IMR-90 (cell line): ENCODE measurements at regions of chr11 and their contacts with region 1.

Region 1: DNA sequence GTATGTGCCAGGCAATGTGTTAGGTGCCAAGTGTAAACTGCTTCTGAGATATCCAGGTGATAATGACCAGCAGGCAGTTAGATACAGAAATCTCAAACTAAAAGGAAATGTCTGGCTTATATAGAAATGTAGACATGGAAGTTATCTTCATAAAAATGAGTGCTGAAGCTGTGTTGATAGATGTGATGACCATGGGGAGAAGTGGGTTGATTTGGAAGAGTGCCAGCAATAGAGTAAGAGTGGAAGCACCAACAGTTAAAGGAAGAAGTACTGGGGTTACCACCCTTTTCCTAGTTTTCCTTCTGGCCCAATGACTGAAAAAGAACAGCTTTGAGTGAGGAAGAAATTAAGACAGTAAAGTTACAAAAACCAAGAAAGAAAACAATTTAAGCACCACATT is 68.5 kb downstream of the C2CD3 start:
- DNase-seq: no peak
- ATAC-seq: no peak
- H3K4me3 ChIP-seq: no peak overlapping the region
- H3K27ac ChIP-seq: no peak overlapping the region
- H3K4me1 ChIP-seq: no peaks in the 10 kb centered on the region
- H3K27me3 ChIP-seq: no peaks in the 10 kb centered on the region
- CTCF ChIP-seq: no peak
- POLR2A ChIP-seq: no peak
- RAD21 ChIP-seq: no peak

Region 2: GRCh38 chr11:74398244-74399159 is 296.2 kb after region 1 on chr11 and contains the start of gene PGM2L1:
- CTCF ChIA-PET with region 1: no interaction called
- POLR2A ChIA-PET with region 1: no interaction called
- dilution Hi-C with region 1: no loop called
- in situ Hi-C with region 1: no loop called
- intact Hi-C with region 1: no loop called
- DNase-seq: peak; percentile 90
- ATAC-seq: peak; percentile 97
- H3K4me3 ChIP-seq: peak within 1 kb of the TSS; percentile 64
- H3K27ac ChIP-seq: peak within 1 kb of the TSS; percentile 75
- H3K4me1 ChIP-seq: no peaks in the 10 kb centered on the region
- H3K27me3 ChIP-seq: no peaks in the 10 kb centered on the region
- CTCF ChIP-seq: no peak
- POLR2A ChIP-seq: peak; percentile 48; the same call in 1 of the 2 replicates
- RAD21 ChIP-seq: 0 out of 2 replicates have a peak, but pooled peaks have one; percentile 1
- total RNA-seq, gene PGM2L1: 1.8 and 2.8 TPM in 2 replicates

Region 3: GRCh38 chr11:74748211-74749127 is 646.1 kb after region 1 on chr11 and contains the start of gene RNF169:
- CTCF ChIA-PET with region 1: no interaction called
- POLR2A ChIA-PET with region 1: interaction called, 20 read pairs
- dilution Hi-C with region 1: no loop called
- in situ Hi-C with region 1: no loop called
- intact Hi-C with region 1: no loop called
- DNase-seq: peak; percentile 96
- ATAC-seq: peak; percentile 99
- H3K4me3 ChIP-seq: peak within 1 kb of the TSS; percentile 90
- H3K27ac ChIP-seq: peak within 1 kb of the TSS; percentile 85
- H3K4me1 ChIP-seq: peaks cover 13% of the 10 kb centered on the region
- H3K27me3 ChIP-seq: no peaks in the 10 kb centered on the region
- CTCF ChIP-seq: no peak
- POLR2A ChIP-seq: peak; percentile 92
- RAD21 ChIP-seq: no peak
- total RNA-seq, gene RNF169: 23.3 and 28.1 TPM in 2 replicates